ENCODE measurements at regions of chr22 and their contacts with region 1.

Region 1: DNA sequence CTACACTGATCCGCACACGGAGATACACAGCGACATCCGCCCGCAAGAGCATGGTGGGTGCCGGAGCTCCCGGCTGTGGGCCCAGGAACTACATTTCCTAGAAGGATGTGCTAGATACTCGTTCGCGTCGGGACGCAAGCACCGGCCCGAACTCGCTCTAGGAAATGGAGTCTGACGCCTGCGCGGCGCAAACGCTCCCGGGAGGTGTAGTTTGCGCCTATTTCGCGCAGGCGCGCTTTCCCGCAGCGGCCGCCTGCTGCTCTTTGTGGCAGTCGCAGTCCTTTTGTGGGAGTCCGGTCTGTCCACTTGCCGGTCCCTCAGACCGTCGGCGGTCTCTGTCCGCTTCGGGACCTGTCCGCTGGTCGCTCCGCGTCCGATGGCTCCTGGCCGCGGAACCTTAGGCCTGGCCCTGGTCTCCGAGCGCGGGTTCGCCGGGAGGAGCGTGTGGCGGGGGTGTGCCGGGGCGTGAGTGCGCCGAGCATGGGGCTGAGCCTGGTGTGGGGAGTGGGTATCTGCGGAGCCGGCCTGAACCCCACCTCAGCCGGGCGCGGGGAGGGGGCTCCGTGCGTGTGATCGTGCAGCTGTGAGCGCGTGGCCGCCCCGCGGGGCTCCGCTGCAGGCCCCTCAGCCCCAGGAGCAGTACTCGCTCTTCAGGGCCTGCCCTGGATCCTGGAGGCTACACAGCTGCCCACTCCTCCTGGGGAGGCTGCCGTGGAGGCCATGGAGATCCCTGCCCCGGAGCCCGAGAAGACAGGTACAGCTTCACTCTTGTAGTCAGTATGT is at the start of gene ZNF74:
- DNase-seq: peak; percentile 83 to 96 (median 91)

Region 2: DNA sequence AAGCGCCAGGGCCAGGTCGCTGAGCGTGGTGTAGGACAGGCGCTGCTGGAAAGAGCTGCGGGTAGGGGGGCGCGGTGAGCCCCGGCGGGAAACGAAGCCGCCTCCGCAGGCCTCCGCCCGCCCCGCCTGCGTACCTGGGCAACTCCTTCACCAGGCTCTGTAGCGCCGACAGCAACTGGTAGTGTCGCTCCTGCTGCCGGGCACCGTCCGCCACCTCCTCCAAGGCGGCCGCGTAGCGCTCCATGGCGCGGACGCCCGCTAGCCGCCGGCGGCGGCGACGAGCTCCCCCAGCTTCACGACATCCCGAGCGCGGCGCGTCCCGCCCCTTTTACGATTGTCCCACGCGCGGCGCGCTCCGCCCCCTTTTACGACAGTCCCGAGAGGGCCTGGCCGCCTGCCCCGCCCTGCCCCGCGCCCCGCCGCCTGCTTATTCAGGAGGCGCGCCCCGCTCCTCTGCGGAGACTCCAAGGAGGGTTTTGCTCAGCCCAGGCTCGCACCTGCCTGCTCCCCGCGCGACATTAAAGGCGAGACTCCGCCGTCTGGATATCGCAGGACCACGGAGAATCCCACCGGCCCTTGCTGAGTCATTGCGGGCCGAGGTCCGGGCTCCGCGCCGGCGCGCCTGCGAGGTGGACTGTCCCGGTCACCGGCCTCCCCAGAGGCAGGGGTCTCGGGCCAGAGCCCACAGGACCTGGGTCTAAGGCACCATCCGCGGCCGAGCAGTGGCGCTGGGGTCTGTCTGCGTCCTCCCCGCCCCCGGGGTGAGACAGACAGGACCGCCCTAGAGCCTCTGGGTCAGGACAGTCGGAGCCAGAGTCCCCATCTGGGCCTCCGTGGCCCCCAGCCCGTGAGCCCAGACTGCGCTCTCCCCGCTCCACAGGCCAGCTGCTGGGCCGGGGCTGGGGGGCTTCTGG is 74.1 kb before region 1 on chr22 and contains the start of gene DGCR6L:
- intact Hi-C with region 1: loop called (anchors 10 kb)
- DNase-seq: peak; percentile 83 to 98 (median 96)

Region 3: GRCh38 chr22:20495861-20496681 is 102.0 kb after region 1 on chr22:
- intact Hi-C with region 1: loop called (anchors 10 kb)
- DNase-seq: peak; percentile 64 to 98 (median 94)